CD4-positive, alpha-beta T cell (primary cell): ENCODE measurements at regions of chr12 and their contacts with region 1.

Region 1: GRCh38 chr12:108618079-108618952 is 15.4 kb downstream of the SELPLG start:
- DNase-seq: peak; percentile 61 to 89 (median 72)
- ATAC-seq: peak; percentile 54
- H3K4me3 ChIP-seq: no peak overlapping the region
- H3K4me3 Mint-ChIP-seq: peak overlapping the region; percentile 30
- H3K27ac ChIP-seq: peak overlapping the region; percentile 49 to 80
- H3K27ac Mint-ChIP-seq: peak overlapping the region; percentile 84
- H3K4me1 ChIP-seq: peaks cover 63% of the 10 kb centered on the region
- H3K4me1 Mint-ChIP-seq: peaks cover 59% of the 10 kb centered on the region
- H3K27me3 ChIP-seq: no peaks in the 10 kb centered on the region
- H3K27me3 Mint-ChIP-seq: no peaks in the 10 kb centered on the region
- CTCF ChIP-seq: peak; percentile 98

Region 2: DNA sequence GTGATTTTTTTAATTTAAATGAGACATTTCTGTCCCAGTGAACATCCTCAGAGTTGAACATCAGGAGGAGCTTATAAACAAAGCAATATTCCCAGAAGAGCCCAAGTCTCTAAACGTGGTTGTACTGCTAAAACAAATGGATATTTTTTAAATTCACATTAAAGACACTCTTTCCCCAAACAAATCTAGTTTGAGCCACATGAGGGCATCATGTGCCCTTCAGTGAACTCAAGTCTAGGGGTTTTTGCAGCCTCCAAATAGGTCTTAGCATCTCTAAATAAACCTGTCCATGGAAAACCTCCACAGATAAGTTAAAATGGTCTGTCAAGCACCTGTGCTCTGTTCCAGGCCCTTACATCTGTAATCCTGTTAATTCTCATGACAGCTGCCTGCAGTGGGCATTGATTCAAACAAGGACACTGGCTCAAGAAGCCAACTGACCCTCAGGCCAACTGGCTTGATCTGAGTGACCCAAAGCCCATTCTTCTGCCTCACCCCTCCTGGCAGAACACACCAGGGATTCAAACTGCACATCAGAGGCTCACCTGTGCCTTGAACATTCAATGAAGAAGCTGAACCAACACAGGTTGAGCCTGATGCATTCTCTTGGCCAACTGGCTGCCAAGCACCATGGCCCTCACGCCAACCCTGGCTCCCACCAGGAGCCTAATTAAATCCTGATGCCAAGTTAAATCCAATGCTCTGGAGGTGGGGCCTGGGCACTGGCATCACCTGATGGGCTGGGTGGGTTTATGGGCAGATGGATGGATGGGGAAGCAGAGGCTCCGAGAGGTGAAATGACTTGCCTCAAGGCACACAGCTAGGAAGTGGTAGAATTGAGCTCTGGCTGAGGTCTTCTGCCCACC is 47.3 kb before region 1 on chr12:
- CTCF ChIA-PET with region 1: interaction called, 102 read pairs
- POLR2A ChIA-PET with region 1: interaction called, 43 read pairs
- intact Hi-C with region 1: loop called (anchors 1 kb)
- DNase-seq: peak in 2 of 14 experiments; percentile 47 to 48
- ATAC-seq: no peak
- H3K4me3 ChIP-seq: no peak overlapping the region
- H3K4me3 Mint-ChIP-seq: peak overlapping the region; percentile 11
- H3K27ac ChIP-seq: peak overlapping the region; percentile 29 to 33
- H3K27ac Mint-ChIP-seq: peak overlapping the region; percentile 90
- H3K4me1 ChIP-seq: peaks cover 59% of the 10 kb centered on the region
- H3K4me1 Mint-ChIP-seq: peaks cover 93% of the 10 kb centered on the region
- H3K27me3 ChIP-seq: no peaks in the 10 kb centered on the region
- H3K27me3 Mint-ChIP-seq: no peaks in the 10 kb centered on the region
- CTCF ChIP-seq: no peak

Region 3: GRCh38 chr12:108576660-108577234 is 41.6 kb before region 1 on chr12:
- CTCF ChIA-PET with region 1: interaction called, 8 read pairs
- POLR2A ChIA-PET with region 1: interaction called, 19 read pairs
- intact Hi-C with region 1: no loop called
- DNase-seq: no peak
- ATAC-seq: no peak
- H3K4me3 ChIP-seq: no peak overlapping the region
- H3K4me3 Mint-ChIP-seq: no peak overlapping the region
- H3K27ac ChIP-seq: no peak overlapping the region
- H3K27ac Mint-ChIP-seq: peak overlapping the region; percentile 76
- H3K4me1 ChIP-seq: peaks cover 15% of the 10 kb centered on the region
- H3K4me1 Mint-ChIP-seq: peaks cover 45% of the 10 kb centered on the region
- H3K27me3 ChIP-seq: no peaks in the 10 kb centered on the region
- H3K27me3 Mint-ChIP-seq: no peaks in the 10 kb centered on the region
- CTCF ChIP-seq: no peak

Region 4: GRCh38 chr12:108643941-108644810 is 25.9 kb after region 1 on chr12:
- CTCF ChIA-PET with region 1: interaction called, 16 read pairs
- POLR2A ChIA-PET with region 1: interaction called, 14 read pairs
- intact Hi-C with region 1: no loop called
- DNase-seq: no peak
- ATAC-seq: no peak
- H3K4me3 ChIP-seq: no peak overlapping the region
- H3K4me3 Mint-ChIP-seq: no peak overlapping the region
- H3K27ac ChIP-seq: no peak overlapping the region
- H3K27ac Mint-ChIP-seq: no peak overlapping the region
- H3K4me1 ChIP-seq: peaks cover 36% of the 10 kb centered on the region
- H3K4me1 Mint-ChIP-seq: peaks cover 31% of the 10 kb centered on the region
- H3K27me3 ChIP-seq: no peaks in the 10 kb centered on the region
- H3K27me3 Mint-ChIP-seq: no peaks in the 10 kb centered on the region
- CTCF ChIP-seq: no peak